Breast epithelium (tissue), 4 donors: ENCODE measurements at regions of chr11 and their contacts with region 1.

Region 1: GRCh38 chr11:8168485-8169257 is at the start of gene RIC3:
- DNase-seq: no peak
- H3K4me3 ChIP-seq: peak within 1 kb of the TSS; percentile 47 to 72 (median 67)
- H3K27ac ChIP-seq: peak within 1 kb of the TSS; percentile 33 to 53
- H3K4me1 ChIP-seq: no peaks in the 10 kb centered on the region
- H3K27me3 ChIP-seq: no peaks in the 10 kb centered on the region
- CTCF ChIP-seq: no peak
- POLR2A ChIP-seq: no peak
- total RNA-seq, gene RIC3: 4.5 to 48.0 (median 24.3) TPM

Region 2: GRCh38 chr11:6606471-6607193 is 1562.0 kb before region 1 on chr11:
- intact Hi-C with region 1: loop called (anchors 5 kb)
- DNase-seq: peak; percentile 81 to 93
- H3K4me3 ChIP-seq: peak overlapping the region; percentile 10 to 92 (median 56)
- H3K27ac ChIP-seq: peak overlapping the region; percentile 92 to 96
- H3K4me1 ChIP-seq: peaks cover 6 to 35% of the 10 kb centered on the region in 2 donors
- H3K27me3 ChIP-seq: no peaks in the 10 kb centered on the region
- CTCF ChIP-seq: no peak
- POLR2A ChIP-seq: no peak

Region 3: DNA sequence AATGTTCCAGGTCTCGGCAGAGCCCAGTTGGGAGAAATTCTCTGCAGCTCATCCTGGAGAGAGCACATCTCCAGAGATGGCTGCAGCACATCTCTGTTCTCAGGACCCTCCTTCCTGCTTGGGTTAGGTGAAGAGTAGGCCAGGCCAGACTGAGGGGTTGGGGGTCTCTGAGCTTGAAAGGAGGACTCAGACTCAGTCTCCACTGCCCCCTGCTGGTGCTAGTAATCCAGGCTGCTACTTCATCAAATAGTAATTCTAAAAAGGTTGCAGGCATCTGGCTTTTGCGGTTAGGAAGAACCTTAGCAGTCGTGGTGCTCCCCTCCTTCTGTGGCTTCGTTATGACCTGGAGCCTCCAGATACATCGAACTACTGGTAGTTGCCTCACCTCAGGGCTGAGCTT is 77.9 kb before region 1 on chr11:
- intact Hi-C with region 1: no loop called
- DNase-seq: peak in 1 of 2 donors; percentile 46
- H3K4me3 ChIP-seq: no peak overlapping the region
- H3K27ac ChIP-seq: no peak overlapping the region
- H3K4me1 ChIP-seq: no peaks in the 10 kb centered on the region
- H3K27me3 ChIP-seq: no peaks in the 10 kb centered on the region
- CTCF ChIP-seq: peak in 2 of 3 donors; percentile 23 to 33
- POLR2A ChIP-seq: no peak

Region 4: GRCh38 chr11:8242499-8243280 is 74.0 kb after region 1 on chr11:
- intact Hi-C with region 1: no loop called
- DNase-seq: no peak
- H3K4me3 ChIP-seq: no peak overlapping the region
- H3K27ac ChIP-seq: no peak overlapping the region
- H3K4me1 ChIP-seq: no peaks in the 10 kb centered on the region
- H3K27me3 ChIP-seq: no peaks in the 10 kb centered on the region
- CTCF ChIP-seq: no peak
- POLR2A ChIP-seq: no peak

Region 5: DNA sequence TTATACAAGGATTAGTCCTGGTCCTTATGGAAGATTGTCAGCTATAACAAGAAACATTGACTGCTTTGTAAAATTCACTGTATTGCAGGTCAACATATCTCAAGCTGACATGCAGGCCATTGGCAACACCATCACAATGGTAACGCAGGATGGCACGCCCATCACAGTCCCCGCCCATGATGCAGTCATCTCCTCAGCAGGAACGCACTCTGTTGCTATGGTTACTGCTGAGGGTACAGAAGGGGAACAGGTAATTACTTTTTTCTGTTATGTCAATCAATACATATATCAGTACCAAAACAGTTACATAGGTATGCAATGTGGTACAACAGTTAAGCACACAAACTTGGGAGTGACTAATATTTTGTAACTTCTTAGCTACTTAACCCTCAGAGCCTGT is 1347.4 kb after region 1 on chr11:
- intact Hi-C with region 1: no loop called
- DNase-seq: no peak
- H3K4me3 ChIP-seq: no peak overlapping the region
- H3K27ac ChIP-seq: no peak overlapping the region
- H3K4me1 ChIP-seq: no peaks in the 10 kb centered on the region
- H3K27me3 ChIP-seq: no peaks in the 10 kb centered on the region
- CTCF ChIP-seq: no peak
- POLR2A ChIP-seq: no peak